ENCODE measurements at regions of chr3 and their contacts with region 1.

Region 1: GRCh38 chr3:108662130-108662738 is 72.7 kb downstream of the DZIP3 start:
- DNase-seq: no peak
- ATAC-seq: peak; percentile 66

Region 2: DNA sequence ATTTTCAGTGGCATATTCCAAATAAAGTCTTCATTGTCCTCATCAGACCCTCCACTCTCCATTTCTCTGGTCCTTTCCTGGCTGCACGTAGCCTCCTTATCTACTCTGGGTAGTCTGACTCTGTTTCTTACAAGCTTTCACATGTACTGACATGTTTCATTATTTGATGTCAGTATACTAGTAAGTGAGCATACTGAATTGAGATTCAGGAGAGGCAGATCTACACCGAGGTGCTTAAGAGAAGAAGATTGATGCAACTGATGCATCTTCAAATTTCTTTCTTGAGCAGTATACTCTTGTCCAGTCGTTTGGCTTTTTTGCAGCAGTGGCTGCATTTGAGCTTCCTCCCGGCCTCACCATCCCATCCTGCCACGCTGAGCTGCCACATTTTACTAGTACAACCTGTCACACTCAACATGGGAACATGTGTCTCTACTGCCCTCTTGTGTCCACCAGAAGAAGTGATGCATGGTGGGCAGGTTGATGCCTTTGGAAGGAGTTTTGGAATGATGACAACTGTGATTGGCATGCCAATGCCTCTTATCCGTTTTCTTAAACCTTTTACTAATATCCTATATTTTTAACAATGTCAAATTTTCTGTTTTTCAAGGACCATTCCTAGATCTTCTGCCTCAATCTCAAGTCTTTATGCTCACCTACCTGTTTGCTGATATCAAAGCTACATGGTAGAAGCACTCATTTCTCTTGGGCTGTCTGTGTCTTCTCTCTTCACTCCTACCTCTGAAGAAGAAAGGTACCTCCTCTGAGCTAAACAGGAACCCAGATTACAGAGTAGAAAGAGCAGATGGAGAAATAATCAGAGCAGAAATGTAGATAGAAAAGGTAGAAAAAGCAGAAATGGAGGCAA is 252.8 kb after region 1 on chr3:
- intact Hi-C with region 1: loop called (anchors 10 kb)
- DNase-seq: no peak
- ATAC-seq: peak; percentile 35

Measured in left ventricle myocardium superior (tissue), 1 donor.